Posterior vena cava (tissue), 2 donors: ENCODE measurements at regions of chr1 and their contacts with region 1.

Region 1: GRCh38 chr1:218323568-218324225 is 21.4 kb upstream of the TGFB2 start:
- DNase-seq: peak; percentile 73

Region 2: GRCh38 chr1:218273762-218274479 is 49.8 kb before region 1 on chr1:
- intact Hi-C with region 1: no loop called
- DNase-seq: no peak

Region 3: GRCh38 chr1:219576931-219577730 is 1253.4 kb after region 1 on chr1:
- intact Hi-C with region 1: loop called in 1 of 2 experiments (anchors 10 kb)
- DNase-seq: no peak

Region 4: GRCh38 chr1:219660666-219661463 is 1337.2 kb after region 1 on chr1:
- intact Hi-C with region 1: loop called in 1 of 2 experiments (anchors 10 kb)
- DNase-seq: peak; percentile 96